B cell (primary cell): ENCODE measurements at regions of chr15 and their contacts with region 1.

Region 1: GRCh38 chr15:31488426-31489204 is 162.0 kb downstream of the KLF13 start:
- DNase-seq: peak; percentile 85
- ATAC-seq: peak; percentile 69
- H3K4me3 ChIP-seq: no peak overlapping the region
- H3K4me3 Mint-ChIP-seq: no peak overlapping the region
- H3K27ac ChIP-seq: no peak overlapping the region
- H3K27ac Mint-ChIP-seq: peak overlapping the region; percentile 15
- H3K4me1 ChIP-seq: peaks cover 11 to 25% of the 10 kb centered on the region in 2 donors
- H3K4me1 Mint-ChIP-seq: peaks cover 23% of the 10 kb centered on the region
- H3K27me3 ChIP-seq: peaks cover 0 to 14% (median 5%) of the 10 kb centered on the region in 4 experiments
- H3K27me3 Mint-ChIP-seq: peaks cover 9% of the 10 kb centered on the region
- CTCF ChIP-seq: peak; percentile 86

Region 2: GRCh38 chr15:30859091-30859874 is 629.3 kb before region 1 on chr15:
- CTCF ChIA-PET with region 1: no interaction called
- POLR2A ChIA-PET with region 1: no interaction called
- intact Hi-C with region 1: no loop called
- DNase-seq: peak; percentile 38
- ATAC-seq: no peak
- H3K4me3 ChIP-seq: no peak overlapping the region
- H3K4me3 Mint-ChIP-seq: no peak overlapping the region
- H3K27ac ChIP-seq: no peak overlapping the region
- H3K27ac Mint-ChIP-seq: no peak overlapping the region
- H3K4me1 ChIP-seq: no peaks in the 10 kb centered on the region
- H3K4me1 Mint-ChIP-seq: peaks cover 4% of the 10 kb centered on the region
- H3K27me3 ChIP-seq: no peaks in the 10 kb centered on the region
- H3K27me3 Mint-ChIP-seq: no peaks in the 10 kb centered on the region
- CTCF ChIP-seq: peak; percentile 86

Region 3: DNA sequence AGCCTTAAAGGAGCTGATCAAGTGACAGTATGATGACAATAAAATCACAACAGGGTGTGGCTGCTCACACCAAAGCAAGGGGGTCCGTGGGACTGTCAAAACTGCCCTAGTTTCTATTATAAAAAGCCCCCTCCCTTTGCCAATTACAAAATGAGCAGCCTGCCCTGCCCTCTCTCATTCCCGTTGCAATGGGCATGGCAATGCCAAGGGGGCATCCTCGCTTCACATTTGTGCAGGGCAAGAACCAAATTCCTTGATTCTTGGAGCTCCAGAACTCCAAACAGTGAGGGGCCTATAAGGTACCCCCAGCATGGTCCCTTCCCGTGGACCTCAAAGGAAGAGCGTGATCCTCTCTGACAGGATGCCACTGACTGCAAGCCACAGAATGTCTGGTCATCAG is 282.2 kb before region 1 on chr15:
- CTCF ChIA-PET with region 1: interaction called, 124 read pairs
- POLR2A ChIA-PET with region 1: no interaction called
- intact Hi-C with region 1: no loop called
- DNase-seq: no peak
- ATAC-seq: no peak
- H3K4me3 ChIP-seq: no peak overlapping the region
- H3K4me3 Mint-ChIP-seq: no peak overlapping the region
- H3K27ac ChIP-seq: no peak overlapping the region
- H3K27ac Mint-ChIP-seq: no peak overlapping the region
- H3K4me1 ChIP-seq: no peaks in the 10 kb centered on the region
- H3K4me1 Mint-ChIP-seq: no peaks in the 10 kb centered on the region
- H3K27me3 ChIP-seq: peaks cover 0 to 1% (median 0%) of the 10 kb centered on the region in 4 experiments
- H3K27me3 Mint-ChIP-seq: no peaks in the 10 kb centered on the region
- CTCF ChIP-seq: no peak

Region 4: DNA sequence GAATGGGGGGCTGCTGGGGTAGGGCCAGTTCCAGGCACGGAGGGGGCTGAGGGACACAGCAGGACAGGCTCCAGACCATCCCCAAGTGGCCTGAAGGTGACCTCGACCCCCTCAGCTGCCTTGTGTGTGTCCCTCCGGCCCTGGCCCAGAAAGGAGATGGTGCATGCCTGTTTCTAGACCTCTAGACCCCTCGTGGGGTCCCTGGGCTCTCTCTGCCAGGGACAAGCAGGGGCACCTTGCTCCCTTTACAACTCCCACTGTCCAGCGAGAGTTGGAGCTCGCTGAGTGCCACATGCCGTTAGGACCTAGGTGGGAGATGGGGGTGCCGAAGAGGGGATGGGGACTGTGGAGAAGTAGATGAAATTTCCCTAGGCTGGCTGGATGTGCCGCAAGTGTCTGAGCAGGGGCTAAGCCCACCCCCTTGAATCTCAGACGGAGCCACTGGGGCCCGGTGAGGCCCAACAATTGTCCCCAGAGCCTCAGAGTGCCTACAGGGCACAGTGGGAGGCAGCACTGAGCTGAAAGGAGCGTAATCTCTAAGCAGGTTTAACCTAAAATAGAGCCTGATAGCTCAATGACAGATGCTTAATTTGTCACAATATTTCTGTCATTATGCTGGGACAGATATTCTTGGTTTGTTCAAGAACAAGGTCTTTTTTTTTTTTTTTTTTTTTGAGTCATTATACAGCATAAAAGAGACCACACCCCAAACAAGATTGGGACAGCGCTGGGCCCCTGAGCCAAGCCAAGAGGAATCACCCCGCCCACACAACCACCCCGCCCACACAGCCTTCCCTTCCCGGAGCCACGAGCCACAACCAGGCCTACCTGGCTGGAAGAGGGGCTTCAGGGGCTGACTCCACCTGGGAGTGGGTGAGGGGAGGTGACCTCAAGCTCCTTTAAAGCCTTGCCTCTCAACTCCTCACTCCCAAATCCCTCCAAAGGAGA is 185.6 kb before region 1 on chr15:
- CTCF ChIA-PET with region 1: interaction called, 23 read pairs
- POLR2A ChIA-PET with region 1: interaction called, 3 read pairs
- intact Hi-C with region 1: no loop called
- DNase-seq: peak; percentile 35
- ATAC-seq: peak; percentile 43
- H3K4me3 ChIP-seq: no peak overlapping the region
- H3K4me3 Mint-ChIP-seq: no peak overlapping the region
- H3K27ac ChIP-seq: no peak overlapping the region
- H3K27ac Mint-ChIP-seq: peak overlapping the region; percentile 26
- H3K4me1 ChIP-seq: peaks cover 30 to 53% of the 10 kb centered on the region in 2 donors
- H3K4me1 Mint-ChIP-seq: peaks cover 50% of the 10 kb centered on the region
- H3K27me3 ChIP-seq: no peaks in the 10 kb centered on the region
- H3K27me3 Mint-ChIP-seq: no peaks in the 10 kb centered on the region
- CTCF ChIP-seq: peak; percentile 12

Region 5: DNA sequence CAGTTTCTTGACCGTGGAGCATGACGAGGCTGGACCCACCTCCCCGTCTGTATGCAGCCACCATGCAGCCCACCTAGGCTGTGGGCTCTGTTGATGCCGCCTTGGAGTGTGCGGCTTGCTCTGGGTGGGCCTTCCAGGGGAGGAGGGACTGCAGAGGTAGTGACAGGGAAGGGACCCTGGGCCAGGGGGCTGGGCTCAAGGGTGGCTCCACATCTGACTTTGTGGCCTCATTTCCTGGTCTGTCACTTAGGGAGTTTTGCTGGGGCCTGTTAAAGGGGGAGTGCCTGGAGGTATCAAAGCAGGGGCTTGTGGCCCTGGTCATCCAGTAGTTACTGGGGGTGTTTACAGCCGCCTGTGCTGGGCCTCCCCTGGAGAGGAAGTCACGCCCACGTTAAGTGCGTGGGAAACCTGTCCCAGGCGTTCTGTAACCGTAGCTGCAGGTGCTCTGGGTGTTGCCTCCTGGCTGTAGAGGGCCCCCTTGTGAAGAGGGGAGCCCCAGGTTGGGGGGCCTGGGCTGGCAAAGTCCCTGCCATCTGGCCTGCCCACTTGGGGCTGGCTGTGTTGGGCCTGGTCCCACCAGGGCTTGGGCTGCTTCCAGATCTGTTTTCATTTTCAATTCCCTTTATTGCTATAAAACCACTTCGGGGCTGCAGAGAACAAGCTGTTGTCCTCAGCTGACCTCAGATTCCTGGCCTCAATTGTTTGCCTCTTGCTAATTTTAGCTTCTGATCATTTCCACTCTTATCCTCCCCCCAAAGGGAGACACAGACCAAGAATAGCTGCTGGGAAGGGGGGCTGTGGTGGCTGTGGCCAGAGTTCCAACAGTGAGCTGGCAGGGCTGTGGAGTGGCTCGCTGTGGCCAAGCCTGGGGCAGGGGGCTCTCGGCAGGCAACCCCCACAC is 135.5 kb before region 1 on chr15:
- CTCF ChIA-PET with region 1: interaction called, 94 read pairs
- POLR2A ChIA-PET with region 1: no interaction called
- intact Hi-C with region 1: loop called (anchors 5 kb)
- DNase-seq: peak; percentile 87
- ATAC-seq: peak; percentile 82
- H3K4me3 ChIP-seq: peak overlapping the region in 4 of 5 experiments; percentile 10 to 58 (median 34)
- H3K4me3 Mint-ChIP-seq: peak overlapping the region; percentile 88
- H3K27ac ChIP-seq: peak overlapping the region; percentile 96 to 97
- H3K27ac Mint-ChIP-seq: peak overlapping the region; percentile 96
- H3K4me1 ChIP-seq: peaks cover 99 to 100% of the 10 kb centered on the region in 2 donors
- H3K4me1 Mint-ChIP-seq: peaks cover 97% of the 10 kb centered on the region
- H3K27me3 ChIP-seq: no peaks in the 10 kb centered on the region
- H3K27me3 Mint-ChIP-seq: no peaks in the 10 kb centered on the region
- CTCF ChIP-seq: no peak

Region 6: DNA sequence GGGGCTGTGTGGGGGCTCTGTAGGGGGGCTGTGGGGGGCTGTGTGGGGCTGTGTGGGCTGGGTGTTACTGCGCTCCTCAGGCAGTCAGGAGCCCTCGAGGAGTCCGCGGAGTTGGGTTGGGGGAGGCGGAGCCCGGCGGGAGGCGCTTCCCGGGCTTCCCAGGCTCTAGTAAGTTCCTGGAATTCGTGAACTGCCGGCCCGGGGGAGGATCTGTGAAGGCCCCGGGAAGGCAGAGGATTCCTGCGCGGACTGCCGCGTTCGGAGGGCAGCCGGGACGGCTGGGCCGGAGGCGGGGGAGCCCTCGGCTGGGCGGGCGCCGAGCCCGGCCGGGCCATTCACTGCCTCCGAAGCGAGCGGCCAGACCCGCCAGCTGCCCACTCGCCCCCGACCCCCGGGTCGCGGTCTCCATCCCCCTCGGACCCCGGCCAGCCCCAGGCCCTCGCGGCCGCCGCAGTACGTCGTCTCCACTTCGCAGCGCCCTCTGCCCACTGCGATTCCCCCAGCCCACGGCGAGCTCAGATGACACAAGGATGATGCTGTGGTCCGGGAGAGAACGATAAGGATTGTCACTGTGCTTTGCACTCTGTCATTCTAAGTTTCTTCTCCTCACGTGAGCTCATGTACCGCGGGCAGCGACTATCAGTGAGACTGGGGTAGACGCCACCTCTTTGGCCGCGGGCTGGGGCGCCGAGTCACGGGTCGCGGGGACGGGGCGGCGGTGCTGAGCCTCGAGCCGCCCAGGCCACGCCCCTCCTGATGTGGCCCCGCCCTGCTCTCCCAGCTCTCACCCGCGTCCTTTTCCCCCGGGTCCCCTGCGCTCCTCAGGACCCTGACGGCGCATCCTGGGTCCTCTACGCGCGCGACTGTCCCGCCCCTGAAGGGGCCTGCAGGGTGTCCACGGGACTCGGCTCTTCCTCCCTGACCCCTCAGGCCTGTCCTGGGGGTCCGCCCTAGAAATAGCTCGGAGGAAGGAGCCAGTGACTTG is 96.6 kb before region 1 on chr15:
- CTCF ChIA-PET with region 1: interaction called, 15 read pairs
- POLR2A ChIA-PET with region 1: no interaction called
- intact Hi-C with region 1: loop called (anchors 2 kb)
- DNase-seq: peak; percentile 86
- ATAC-seq: peak; percentile 92
- H3K4me3 ChIP-seq: peak overlapping the region; percentile 22 to 90 (median 82)
- H3K4me3 Mint-ChIP-seq: peak overlapping the region; percentile 94
- H3K27ac ChIP-seq: peak overlapping the region; percentile 48 to 52
- H3K27ac Mint-ChIP-seq: peak overlapping the region; percentile 89
- H3K4me1 ChIP-seq: peaks cover 3 to 13% of the 10 kb centered on the region in 2 donors
- H3K4me1 Mint-ChIP-seq: peaks cover 17% of the 10 kb centered on the region
- H3K27me3 ChIP-seq: no peaks in the 10 kb centered on the region
- H3K27me3 Mint-ChIP-seq: no peaks in the 10 kb centered on the region
- CTCF ChIP-seq: no peak

Region 7: GRCh38 chr15:31440754-31441311 is 47.8 kb before region 1 on chr15:
- CTCF ChIA-PET with region 1: interaction called, 326 read pairs
- POLR2A ChIA-PET with region 1: interaction called, 8 read pairs
- intact Hi-C with region 1: loop called (anchors 1 kb)
- DNase-seq: peak; percentile 46
- ATAC-seq: peak; percentile 37
- H3K4me3 ChIP-seq: peak overlapping the region in 4 of 5 experiments; percentile 50 to 68 (median 64)
- H3K4me3 Mint-ChIP-seq: peak overlapping the region; percentile 71
- H3K27ac ChIP-seq: peak overlapping the region; percentile 15 to 68
- H3K27ac Mint-ChIP-seq: no peak overlapping the region
- H3K4me1 ChIP-seq: peaks cover 33 to 52% of the 10 kb centered on the region in 2 donors
- H3K4me1 Mint-ChIP-seq: peaks cover 59% of the 10 kb centered on the region
- H3K27me3 ChIP-seq: no peaks in the 10 kb centered on the region
- H3K27me3 Mint-ChIP-seq: no peaks in the 10 kb centered on the region
- CTCF ChIP-seq: no peak